MCF 10A (cell line): ENCODE measurements at regions of chr11 and their contacts with region 1.

Region 1: GRCh38 chr11:36492724-36493304 is 17.3 kb downstream of the TRAF6 start:
- DNase-seq: peak; percentile 61
- H3K4me3 Mint-ChIP-seq: no peak overlapping the region
- H3K27ac Mint-ChIP-seq: no peak overlapping the region
- H3K4me1 Mint-ChIP-seq: no peaks in the 10 kb centered on the region
- H3K27me3 Mint-ChIP-seq: no peaks in the 10 kb centered on the region
- CTCF ChIP-seq: peak; percentile 80

Region 2: GRCh38 chr11:36289226-36289852 is 203.5 kb before region 1 on chr11 and contains the start of gene COMMD9:
- CTCF ChIA-PET with region 1: interaction called, 51 read pairs
- POLR2A ChIA-PET with region 1: interaction called, 7 read pairs
- intact Hi-C with region 1: loop called (anchors 1 kb)
- DNase-seq: peak; percentile 90
- H3K4me3 Mint-ChIP-seq: peak within 1 kb of the TSS; percentile 84
- H3K27ac Mint-ChIP-seq: peak within 1 kb of the TSS; percentile 91
- H3K4me1 Mint-ChIP-seq: peaks cover 28% of the 10 kb centered on the region
- H3K27me3 Mint-ChIP-seq: no peaks in the 10 kb centered on the region
- CTCF ChIP-seq: no peak
- total RNA-seq, gene COMMD9: 38.7 and 39.8 TPM in 2 replicates

Region 3: DNA sequence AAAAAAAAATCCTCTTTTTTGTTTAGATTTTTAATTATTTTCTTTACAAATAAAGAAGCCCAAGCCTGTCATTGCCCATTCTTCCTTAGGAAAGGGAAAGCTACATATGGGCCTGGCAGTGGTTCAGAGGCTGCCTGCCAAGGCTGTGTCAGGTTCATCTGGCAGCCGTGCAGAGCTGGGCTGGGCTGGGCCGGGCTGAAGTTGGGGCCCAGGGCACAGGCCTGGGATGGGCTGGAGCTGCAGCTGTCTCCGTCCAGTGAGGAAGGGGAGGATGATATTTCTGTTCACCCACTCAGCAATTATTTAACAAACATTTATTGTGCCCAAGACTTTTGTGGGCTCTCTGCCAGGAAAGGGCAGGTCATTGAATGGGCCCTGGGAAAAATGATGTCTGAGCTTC is 192.2 kb before region 1 on chr11:
- CTCF ChIA-PET with region 1: interaction called, 46 read pairs
- POLR2A ChIA-PET with region 1: interaction called, 5 read pairs
- intact Hi-C with region 1: loop called (anchors 5 kb)
- DNase-seq: peak; percentile 86
- H3K4me3 Mint-ChIP-seq: peak overlapping the region; percentile 43
- H3K27ac Mint-ChIP-seq: peak overlapping the region; percentile 17
- H3K4me1 Mint-ChIP-seq: peaks cover 40% of the 10 kb centered on the region
- H3K27me3 Mint-ChIP-seq: no peaks in the 10 kb centered on the region
- CTCF ChIP-seq: no peak

Region 4: DNA sequence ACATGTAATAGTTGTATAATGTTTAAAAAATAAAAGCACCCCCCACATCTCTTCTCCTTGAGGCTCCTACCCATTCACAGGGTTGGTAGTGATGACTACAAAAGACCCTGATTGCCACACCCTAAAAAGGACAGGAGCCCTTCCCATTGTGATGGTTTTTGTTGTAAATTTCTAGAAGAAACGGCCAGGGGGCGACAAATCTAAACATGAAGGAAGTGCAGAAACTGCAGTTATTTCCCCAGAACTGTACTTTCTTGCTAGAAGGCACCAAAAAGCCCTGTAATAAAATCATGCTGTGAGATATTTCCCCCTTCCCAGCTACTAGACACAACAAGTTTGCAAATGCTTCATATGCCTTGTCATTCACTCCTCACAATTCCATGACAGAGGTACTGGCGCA is 185.9 kb before region 1 on chr11:
- CTCF ChIA-PET with region 1: interaction called, 46 read pairs
- POLR2A ChIA-PET with region 1: no interaction called
- intact Hi-C with region 1: loop called (anchors 5 kb)
- DNase-seq: peak; percentile 65
- H3K4me3 Mint-ChIP-seq: no peak overlapping the region
- H3K27ac Mint-ChIP-seq: no peak overlapping the region
- H3K4me1 Mint-ChIP-seq: peaks cover 39% of the 10 kb centered on the region
- H3K27me3 Mint-ChIP-seq: no peaks in the 10 kb centered on the region
- CTCF ChIP-seq: peak; percentile 45

Region 5: DNA sequence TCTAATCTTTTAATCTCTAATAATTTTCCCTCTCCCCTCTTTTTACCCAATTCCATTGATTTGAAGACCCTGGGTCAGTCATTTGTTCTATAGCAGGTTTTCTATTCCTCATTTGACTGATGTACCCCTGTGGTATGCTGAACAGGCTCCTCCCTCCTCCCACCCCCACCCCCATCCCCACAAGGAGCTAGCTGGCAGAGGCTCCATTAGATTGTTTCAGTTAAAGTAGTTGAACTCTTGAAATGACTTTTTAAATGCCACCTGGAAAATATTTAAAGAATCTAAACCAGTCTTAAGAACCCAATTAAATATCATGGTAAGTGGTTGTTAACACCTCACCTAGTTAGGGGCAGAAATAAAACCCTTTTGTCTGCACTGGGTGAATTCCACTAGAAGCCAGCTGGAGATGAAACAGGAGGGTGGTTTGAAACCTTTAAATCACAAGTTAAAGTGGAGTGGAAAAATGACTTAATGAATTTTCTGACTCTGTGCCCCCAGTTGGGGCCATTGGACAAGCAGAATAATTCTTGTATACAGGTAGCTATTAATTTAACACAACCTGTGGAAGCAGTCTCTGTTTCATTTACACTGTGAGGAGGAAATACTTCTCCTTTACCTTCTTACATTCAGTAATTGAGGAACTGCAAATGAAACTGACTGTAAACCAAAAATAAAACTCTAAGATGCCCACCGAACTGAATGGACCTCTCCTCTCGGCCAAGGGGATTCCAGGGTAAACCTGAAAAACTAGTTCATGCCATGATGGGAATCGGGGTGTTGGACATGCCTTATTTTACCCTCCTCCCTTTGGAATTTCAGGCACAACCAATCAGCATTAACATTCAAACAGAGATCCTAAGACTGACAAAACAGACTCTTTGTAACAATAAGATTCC is 166.0 kb before region 1 on chr11:
- CTCF ChIA-PET with region 1: no interaction called
- POLR2A ChIA-PET with region 1: no interaction called
- intact Hi-C with region 1: no loop called
- DNase-seq: no peak
- H3K4me3 Mint-ChIP-seq: no peak overlapping the region
- H3K27ac Mint-ChIP-seq: no peak overlapping the region
- H3K4me1 Mint-ChIP-seq: no peaks in the 10 kb centered on the region
- H3K27me3 Mint-ChIP-seq: no peaks in the 10 kb centered on the region
- CTCF ChIP-seq: no peak

Region 6: GRCh38 chr11:36411202-36411640 is 81.6 kb before region 1 on chr11:
- CTCF ChIA-PET with region 1: no interaction called
- POLR2A ChIA-PET with region 1: no interaction called
- intact Hi-C with region 1: no loop called
- DNase-seq: no peak
- H3K4me3 Mint-ChIP-seq: no peak overlapping the region
- H3K27ac Mint-ChIP-seq: peak overlapping the region; percentile 46
- H3K4me1 Mint-ChIP-seq: no peaks in the 10 kb centered on the region
- H3K27me3 Mint-ChIP-seq: no peaks in the 10 kb centered on the region
- CTCF ChIP-seq: no peak

Region 7: DNA sequence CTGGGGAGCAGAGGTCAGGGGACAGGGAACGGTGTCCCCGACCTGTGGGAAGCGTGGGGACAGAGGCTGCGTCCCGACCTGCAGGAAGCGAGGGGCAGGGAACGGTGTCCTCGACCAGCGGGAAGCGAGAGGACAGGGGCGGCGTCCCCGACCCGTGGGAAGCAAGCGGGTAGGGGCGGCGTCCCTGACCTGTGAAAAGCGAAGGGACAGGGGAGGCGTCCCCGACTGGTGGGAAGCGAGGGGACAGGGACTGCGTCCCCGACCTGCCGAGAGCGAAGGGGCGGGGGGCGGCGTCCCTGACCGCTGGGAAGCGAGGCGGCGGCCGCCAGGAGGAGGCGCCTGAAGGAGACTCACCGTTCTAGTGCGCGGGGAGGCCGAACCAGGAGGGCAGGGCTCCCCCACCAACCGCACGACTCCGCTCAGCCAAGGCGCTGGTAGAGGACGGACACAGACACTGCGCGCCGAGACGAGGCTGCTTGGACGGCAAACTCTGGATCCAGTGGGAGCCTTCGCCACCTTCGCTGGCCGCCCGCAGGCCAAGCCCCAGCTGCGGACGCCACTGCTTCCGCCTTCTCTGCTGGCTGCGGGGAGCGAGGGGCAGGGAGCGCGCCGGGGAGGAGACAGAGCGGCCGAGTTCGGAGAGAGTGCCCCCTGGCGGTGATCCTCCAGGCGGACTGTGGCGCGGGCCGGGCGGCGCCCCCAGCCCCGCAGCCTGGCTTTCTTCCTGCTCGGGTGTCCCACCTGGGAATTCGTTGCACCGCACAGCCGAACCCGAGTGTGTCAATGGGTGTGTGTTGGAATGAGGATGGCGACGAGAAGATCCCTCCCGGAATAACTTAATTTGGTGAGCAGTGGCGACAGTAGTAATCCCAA is 17.1 kb after region 1 on chr11 and contains the start of gene TRAF6:
- CTCF ChIA-PET with region 1: interaction called, 19 read pairs
- POLR2A ChIA-PET with region 1: interaction called, 22 read pairs
- intact Hi-C with region 1: no loop called
- DNase-seq: peak; percentile 87
- H3K4me3 Mint-ChIP-seq: peak within 1 kb of the TSS; percentile 99
- H3K27ac Mint-ChIP-seq: peak within 1 kb of the TSS; percentile 98
- H3K4me1 Mint-ChIP-seq: peaks cover 19% of the 10 kb centered on the region
- H3K27me3 Mint-ChIP-seq: no peaks in the 10 kb centered on the region
- CTCF ChIP-seq: peak; percentile 90
- total RNA-seq, gene TRAF6: 9.2 and 12.2 TPM in 2 replicates